Mammary epithelial cell (primary cell): ENCODE measurements at regions of chr9 and their contacts with region 1.

Region 1: DNA sequence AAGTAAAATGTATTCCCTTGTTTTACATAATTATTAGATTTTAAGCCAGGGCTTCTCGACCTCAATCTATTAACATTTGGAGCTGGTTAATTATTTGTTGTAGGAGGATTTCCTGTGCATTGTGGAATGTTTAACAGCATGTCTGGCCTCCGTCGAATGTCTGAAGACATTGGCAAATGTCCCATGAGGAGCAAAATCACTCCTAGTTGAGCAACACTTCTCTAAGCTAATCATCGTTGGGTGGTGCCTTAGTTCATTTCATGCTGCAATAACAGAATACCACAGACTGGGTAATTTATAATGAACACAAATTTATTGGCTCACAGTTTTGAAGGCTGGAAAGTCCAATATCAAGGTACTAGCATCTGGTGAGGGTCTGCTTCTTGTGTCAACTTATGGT is 13.4 kb upstream of the VPS13A start:
- DNase-seq: peak; percentile 65
- H3K4me3 ChIP-seq: no peak overlapping the region
- H3K27ac ChIP-seq: no peak overlapping the region
- H3K4me1 ChIP-seq: peaks cover 26% of the 10 kb centered on the region
- H3K27me3 ChIP-seq: no peaks in the 10 kb centered on the region
- CTCF ChIP-seq: no peak

Region 2: DNA sequence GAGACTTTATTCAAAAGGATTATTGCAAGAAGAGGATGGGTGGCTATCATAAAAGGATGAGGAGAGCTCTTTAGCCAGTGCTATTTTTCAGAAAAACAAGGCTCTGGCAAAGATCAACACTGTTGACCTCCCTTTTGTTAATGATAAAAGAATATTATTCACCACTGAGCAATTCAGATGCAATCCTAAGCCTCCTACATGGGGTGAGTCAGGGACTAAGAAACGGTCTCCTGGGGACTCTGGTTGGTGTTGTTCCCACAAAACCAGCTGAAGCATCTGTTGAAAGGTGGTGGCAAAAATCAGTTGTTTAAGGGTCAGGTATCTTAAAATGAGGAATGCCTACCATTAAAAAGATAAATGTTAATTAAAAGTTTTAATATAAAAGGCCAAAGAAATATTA is 712.6 kb before region 1 on chr9:
- CTCF ChIA-PET with region 1: no interaction called
- dilution Hi-C with region 1: no loop called
- in situ Hi-C with region 1: loop called in 1 of 2 experiments (anchors 25 kb)
- intact Hi-C with region 1: loop called (anchors 5 kb)
- DNase-seq: peak; percentile 57
- H3K4me3 ChIP-seq: no peak overlapping the region
- H3K27ac ChIP-seq: no peak overlapping the region
- H3K4me1 ChIP-seq: peaks cover 13% of the 10 kb centered on the region
- H3K27me3 ChIP-seq: no peaks in the 10 kb centered on the region
- CTCF ChIP-seq: no peak

Region 3: GRCh38 chr9:76761448-76761847 is 402.4 kb before region 1 on chr9:
- CTCF ChIA-PET with region 1: no interaction called
- dilution Hi-C with region 1: no loop called
- in situ Hi-C with region 1: no loop called
- intact Hi-C with region 1: loop called (anchors 5 kb)
- DNase-seq: no peak
- H3K4me3 ChIP-seq: no peak overlapping the region
- H3K27ac ChIP-seq: no peak overlapping the region
- H3K4me1 ChIP-seq: no peaks in the 10 kb centered on the region
- H3K27me3 ChIP-seq: no peaks in the 10 kb centered on the region
- CTCF ChIP-seq: peak; percentile 17 to 35

Region 4: DNA sequence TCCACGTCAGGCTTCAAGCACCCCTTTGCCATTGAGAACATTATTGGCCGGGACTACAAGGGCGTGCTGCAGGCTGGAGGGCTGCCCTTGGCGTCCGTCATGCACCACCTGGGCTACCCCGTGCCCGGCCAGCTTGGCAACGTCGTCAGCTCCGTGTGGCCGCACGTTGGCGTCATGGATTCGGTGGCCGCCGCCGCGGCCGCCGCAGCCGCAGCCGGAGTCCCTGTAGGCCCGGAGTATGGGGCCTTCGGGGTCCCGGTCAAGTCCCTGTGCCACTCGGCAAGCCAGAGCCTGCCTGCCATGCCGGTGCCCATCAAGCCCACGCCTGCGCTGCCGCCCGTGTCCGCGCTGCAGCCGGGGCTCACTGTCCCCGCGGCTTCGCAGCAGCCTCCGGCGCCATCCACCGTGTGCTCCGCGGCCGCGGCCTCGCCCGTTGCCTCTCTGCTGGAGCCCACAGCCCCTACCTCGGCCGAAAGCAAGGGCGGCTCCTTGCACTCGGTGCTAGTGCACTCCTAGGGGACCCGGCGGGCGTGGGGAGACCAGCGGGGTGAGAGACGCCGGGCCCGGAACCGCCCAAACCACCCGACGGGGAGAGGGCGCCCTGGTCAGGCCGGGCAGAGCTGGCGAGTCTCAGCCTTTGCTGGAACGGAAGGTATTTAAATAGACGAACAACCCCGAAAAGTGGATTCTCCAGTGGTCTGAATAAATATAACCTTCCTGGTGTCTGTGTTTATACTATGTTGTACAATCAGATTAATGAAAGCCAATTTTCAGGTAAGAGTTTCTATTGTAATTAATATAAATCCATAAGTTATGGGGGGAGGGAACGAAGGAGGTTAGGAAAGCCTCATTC is 143.2 kb before region 1 on chr9:
- CTCF ChIA-PET with region 1: no interaction called
- dilution Hi-C with region 1: no loop called
- in situ Hi-C with region 1: loop called in 1 of 2 experiments (anchors 10 kb)
- intact Hi-C with region 1: no loop called
- DNase-seq: no peak
- H3K4me3 ChIP-seq: peak overlapping the region in 1 of 3 experiments; percentile 25
- H3K27ac ChIP-seq: no peak overlapping the region
- H3K4me1 ChIP-seq: peaks cover 23% of the 10 kb centered on the region
- H3K27me3 ChIP-seq: peaks cover 65% of the 10 kb centered on the region
- CTCF ChIP-seq: no peak

Region 5: GRCh38 chr9:77111408-77111807 is 52.5 kb before region 1 on chr9:
- CTCF ChIA-PET with region 1: no interaction called
- dilution Hi-C with region 1: no loop called
- in situ Hi-C with region 1: no loop called
- intact Hi-C with region 1: no loop called
- DNase-seq: no peak
- H3K4me3 ChIP-seq: no peak overlapping the region
- H3K27ac ChIP-seq: no peak overlapping the region
- H3K4me1 ChIP-seq: no peaks in the 10 kb centered on the region
- H3K27me3 ChIP-seq: peaks cover 3% of the 10 kb centered on the region
- CTCF ChIP-seq: no peak